PC-9 (cell line): ENCODE measurements at regions of chr2 and their contacts with region 1.

Region 1: DNA sequence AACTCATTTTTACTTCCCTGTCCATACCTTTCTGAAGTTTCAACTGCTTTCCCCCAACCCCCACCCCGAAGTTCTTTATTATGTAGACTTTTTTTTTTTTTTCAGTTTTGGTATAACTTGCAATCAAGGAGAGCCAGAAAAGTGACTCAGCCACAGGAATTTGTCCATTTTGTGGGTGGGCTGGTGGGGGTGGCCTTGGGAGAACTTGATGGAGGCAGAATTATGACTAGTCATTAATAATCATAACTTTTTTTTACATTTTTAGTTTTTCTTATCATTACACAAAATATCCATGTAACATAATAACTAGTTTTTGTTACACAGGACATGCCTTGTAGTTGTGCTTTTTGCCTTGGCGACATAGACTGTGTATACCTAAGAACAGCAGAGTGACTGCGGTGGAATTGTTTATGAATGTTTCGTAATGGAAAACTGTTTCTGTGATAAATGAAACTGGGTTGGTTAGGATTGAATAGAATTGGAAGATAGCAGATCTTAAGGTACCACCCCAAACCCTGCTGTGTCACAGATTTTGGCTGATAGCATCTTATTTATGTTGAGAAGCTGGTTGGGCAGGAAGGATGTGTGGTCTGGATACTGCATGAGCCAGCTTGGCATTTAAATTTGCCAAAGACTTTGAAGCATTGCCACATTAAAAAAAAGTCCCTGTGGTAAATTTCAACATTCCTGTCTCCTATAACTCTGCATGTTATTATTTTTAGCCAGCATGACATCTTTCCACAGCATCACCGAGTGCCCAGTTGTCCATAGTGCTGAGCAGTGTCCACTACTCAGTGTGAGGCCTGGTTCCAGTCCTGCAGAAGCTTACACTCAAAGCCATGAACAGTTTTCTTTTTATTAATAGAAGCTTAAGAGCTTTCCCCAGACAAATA is 30.7 kb downstream of the LYPD6B start:
- DNase-seq: peak; percentile 73 to 98
- H3K4me3 ChIP-seq: peak overlapping the region; percentile 38; the same call in 1 of the 2 replicates
- H3K27ac ChIP-seq: peak overlapping the region; percentile 99
- H3K4me1 ChIP-seq: peaks cover 62% of the 10 kb centered on the region
- H3K27me3 ChIP-seq: no peaks in the 10 kb centered on the region
- CTCF ChIP-seq: no peak

Region 2: GRCh38 chr2:148971547-148971946 is 97.7 kb before region 1 on chr2:
- CTCF ChIA-PET with region 1: no interaction called
- POLR2A ChIA-PET with region 1: no interaction called
- intact Hi-C with region 1: no loop called
- DNase-seq: no peak
- H3K4me3 ChIP-seq: no peak overlapping the region
- H3K27ac ChIP-seq: no peak overlapping the region
- H3K4me1 ChIP-seq: no peaks in the 10 kb centered on the region
- H3K27me3 ChIP-seq: no peaks in the 10 kb centered on the region
- CTCF ChIP-seq: no peak

Region 3: GRCh38 chr2:149017116-149017985 is 51.9 kb before region 1 on chr2:
- CTCF ChIA-PET with region 1: no interaction called
- POLR2A ChIA-PET with region 1: no interaction called
- intact Hi-C with region 1: loop called (anchors 1 kb)
- DNase-seq: peak; percentile 46 to 65
- H3K4me3 ChIP-seq: no peak overlapping the region
- H3K27ac ChIP-seq: no peak overlapping the region
- H3K4me1 ChIP-seq: no peaks in the 10 kb centered on the region; the same call in 1 of the 2 replicates
- H3K27me3 ChIP-seq: no peaks in the 10 kb centered on the region
- CTCF ChIP-seq: peak; percentile 83

Region 4: DNA sequence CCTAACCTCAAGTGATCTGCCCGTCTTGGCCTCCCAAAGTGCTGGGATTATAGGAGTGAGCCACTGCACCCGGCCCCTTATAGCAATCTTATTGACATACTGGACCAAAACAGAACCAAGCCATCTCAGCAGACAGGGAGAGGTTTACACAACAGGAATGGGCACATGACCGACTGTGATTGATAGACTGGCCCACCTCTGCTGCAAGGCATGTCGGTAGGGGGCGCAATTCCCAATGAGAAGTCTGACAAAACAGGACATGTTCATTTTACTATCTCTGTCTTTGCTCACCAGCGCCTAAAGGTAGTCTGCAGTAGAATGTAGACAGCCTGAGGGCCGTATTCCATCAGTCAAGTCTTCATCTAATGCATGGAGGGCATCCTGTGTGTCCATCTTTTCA is 28.8 kb before region 1 on chr2:
- CTCF ChIA-PET with region 1: interaction called, 4 read pairs
- POLR2A ChIA-PET with region 1: no interaction called
- intact Hi-C with region 1: loop called (anchors 1 kb)
- DNase-seq: no peak
- H3K4me3 ChIP-seq: no peak overlapping the region
- H3K27ac ChIP-seq: peak overlapping the region; percentile 32; the same call in 1 of the 2 replicates
- H3K4me1 ChIP-seq: peaks cover 12% of the 10 kb centered on the region
- H3K27me3 ChIP-seq: no peaks in the 10 kb centered on the region
- CTCF ChIP-seq: peak; percentile 55

Region 5: DNA sequence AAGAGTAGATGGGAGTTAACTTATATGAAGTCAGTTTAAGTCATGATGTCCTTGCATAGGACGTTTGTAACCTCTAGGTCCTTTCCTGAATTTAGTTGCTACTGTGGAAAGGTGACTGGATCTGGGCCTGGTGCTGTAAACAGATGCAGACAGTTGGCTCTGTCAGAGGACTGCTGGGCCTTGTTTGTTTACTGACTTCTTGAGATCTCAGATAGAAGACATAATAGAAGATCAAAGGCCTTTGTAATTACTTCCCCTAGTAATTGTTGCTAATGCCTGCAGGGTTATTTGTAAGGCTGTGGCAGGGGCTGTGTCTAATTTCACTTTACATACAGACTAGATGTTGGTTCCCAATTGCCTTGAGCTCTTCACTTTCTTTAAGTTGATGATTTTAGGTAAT is 11.7 kb after region 1 on chr2:
- CTCF ChIA-PET with region 1: interaction called, 3 read pairs
- POLR2A ChIA-PET with region 1: no interaction called
- intact Hi-C with region 1: loop called (anchors 1 kb)
- DNase-seq: peak in 1 of 2 experiments; percentile 83
- H3K4me3 ChIP-seq: no peak overlapping the region
- H3K27ac ChIP-seq: peak overlapping the region; percentile 39; the same call in 1 of the 2 replicates
- H3K4me1 ChIP-seq: peaks cover 61% of the 10 kb centered on the region
- H3K27me3 ChIP-seq: no peaks in the 10 kb centered on the region
- CTCF ChIP-seq: no peak

Region 6: GRCh38 chr2:149167411-149167810 is 98.2 kb after region 1 on chr2:
- CTCF ChIA-PET with region 1: no interaction called
- POLR2A ChIA-PET with region 1: no interaction called
- intact Hi-C with region 1: loop called (anchors 1 kb)
- DNase-seq: peak in 1 of 2 experiments; percentile 69
- H3K4me3 ChIP-seq: no peak overlapping the region
- H3K27ac ChIP-seq: peak overlapping the region; percentile 34
- H3K4me1 ChIP-seq: peaks cover 56% of the 10 kb centered on the region
- H3K27me3 ChIP-seq: no peaks in the 10 kb centered on the region
- CTCF ChIP-seq: no peak

Region 7: DNA sequence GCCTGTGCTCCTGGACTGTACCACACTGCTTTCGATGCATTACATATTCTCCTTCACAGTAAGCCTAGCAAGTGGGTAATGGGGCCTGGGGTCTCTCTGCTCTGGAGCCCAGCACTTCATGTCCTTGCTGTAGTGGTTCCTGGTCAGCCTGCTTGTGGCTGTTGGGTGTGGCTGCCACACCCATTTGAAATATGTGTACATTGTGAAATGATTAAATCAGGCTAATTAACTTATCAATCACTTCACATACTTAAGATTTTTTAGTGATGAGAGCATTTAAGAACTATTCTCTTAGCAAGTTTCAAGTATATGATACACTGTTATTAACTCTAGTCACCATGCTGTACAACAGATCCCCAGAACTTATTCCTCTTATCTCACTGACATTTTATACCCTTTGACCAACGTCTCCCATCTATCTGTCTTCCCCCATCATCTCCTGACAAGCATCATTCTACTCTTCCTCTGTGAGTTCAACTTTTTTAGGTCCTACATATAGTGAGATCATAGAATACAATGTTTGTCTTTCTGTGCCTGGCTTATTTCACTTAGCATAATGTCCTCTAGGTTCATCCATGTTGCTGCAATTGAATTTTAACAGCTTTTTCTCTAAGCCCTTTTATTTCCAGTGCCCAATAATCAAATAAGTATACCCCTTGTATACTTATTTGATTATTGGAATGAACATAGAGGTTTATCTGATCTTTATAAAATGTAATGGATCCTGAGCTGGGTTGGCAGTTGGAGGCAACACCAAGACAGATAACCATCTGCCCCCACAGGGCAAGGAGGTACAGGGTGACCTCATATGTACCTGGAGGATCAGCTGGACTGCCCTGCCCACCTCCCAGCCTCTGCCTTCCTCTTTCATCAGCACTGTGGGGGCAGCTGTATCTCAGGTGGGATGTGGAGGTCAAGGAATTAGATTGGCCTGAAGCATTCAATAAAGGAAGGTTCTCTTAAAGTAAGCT is 353.4 kb after region 1 on chr2:
- CTCF ChIA-PET with region 1: no interaction called
- POLR2A ChIA-PET with region 1: no interaction called
- intact Hi-C with region 1: loop called (anchors 5 kb)
- DNase-seq: peak; percentile 57 to 87
- H3K4me3 ChIP-seq: no peak overlapping the region
- H3K27ac ChIP-seq: peak overlapping the region; percentile 70
- H3K4me1 ChIP-seq: peaks cover 27% of the 10 kb centered on the region
- H3K27me3 ChIP-seq: no peaks in the 10 kb centered on the region
- CTCF ChIP-seq: no peak